ENCODE measurements at regions of chr5 and their contacts with region 1.

Region 1: GRCh38 chr5:99104538-99105132 is 175.8 kb upstream of the CHD1 start:
- DNase-seq: peak; percentile 30
- ATAC-seq: peak; percentile 59; the same call in 1 of the 2 replicates
- H3K4me3 ChIP-seq: no peak overlapping the region
- H3K27ac ChIP-seq: no peak overlapping the region
- H3K4me1 ChIP-seq: no peaks in the 10 kb centered on the region
- H3K27me3 ChIP-seq: no peaks in the 10 kb centered on the region
- CTCF ChIP-seq: peak; percentile 65
- POLR2A ChIP-seq: no peak
- RAD21 ChIP-seq: peak; percentile 60

Region 2: DNA sequence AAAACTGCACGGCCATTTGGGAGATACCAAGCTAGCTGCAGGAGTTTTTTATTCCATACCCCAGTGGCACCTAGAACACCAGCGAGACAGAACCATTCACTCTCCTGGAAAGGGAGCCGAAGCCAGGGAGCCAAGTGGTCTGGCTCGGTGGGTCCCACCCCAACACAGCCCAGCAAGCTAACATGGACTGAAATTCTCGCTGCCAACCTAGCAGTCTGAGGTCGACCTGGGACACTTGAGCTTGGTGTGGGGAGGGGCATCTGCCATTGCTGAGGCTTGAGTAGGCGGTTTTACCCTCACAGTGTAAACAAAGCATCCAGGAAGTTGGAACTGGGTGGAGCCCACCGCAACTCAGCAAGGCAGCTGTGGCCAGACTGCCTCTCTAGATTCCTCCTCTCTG is 67.0 kb before region 1 on chr5:
- CTCF ChIA-PET with region 1: no interaction called
- POLR2A ChIA-PET with region 1: interaction called, 12 read pairs
- dilution Hi-C with region 1: no loop called
- in situ Hi-C with region 1: no loop called
- intact Hi-C with region 1: no loop called
- DNase-seq: no peak
- ATAC-seq: no peak
- H3K4me3 ChIP-seq: no peak overlapping the region
- H3K27ac ChIP-seq: no peak overlapping the region
- H3K4me1 ChIP-seq: peaks cover 3% of the 10 kb centered on the region; the same call in 1 of the 2 replicates
- H3K27me3 ChIP-seq: no peaks in the 10 kb centered on the region
- CTCF ChIP-seq: no peak
- POLR2A ChIP-seq: no peak
- RAD21 ChIP-seq: no peak

Region 3: DNA sequence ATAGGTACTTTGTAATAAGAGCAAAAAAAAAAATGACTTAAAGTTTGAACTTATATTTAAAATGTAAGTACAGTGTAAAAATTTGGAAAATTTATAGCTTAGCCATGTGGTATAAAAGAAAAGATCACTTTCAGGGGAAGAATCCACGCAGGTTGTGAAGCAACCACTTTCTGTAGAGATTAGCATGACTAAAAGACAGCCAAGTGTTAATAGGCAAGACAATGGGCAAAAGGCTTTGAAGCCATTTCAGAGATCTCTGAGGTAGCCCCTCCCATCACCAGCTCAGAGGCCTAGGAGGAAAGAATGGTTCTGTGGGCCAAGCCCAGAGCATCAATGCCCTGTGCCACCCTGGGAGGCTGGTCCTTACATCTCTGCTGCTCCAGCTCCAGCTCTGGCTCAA is 170.5 kb after region 1 on chr5:
- CTCF ChIA-PET with region 1: no interaction called
- POLR2A ChIA-PET with region 1: no interaction called
- dilution Hi-C with region 1: no loop called
- in situ Hi-C with region 1: no loop called
- intact Hi-C with region 1: no loop called
- DNase-seq: no peak
- ATAC-seq: no peak
- H3K4me3 ChIP-seq: no peak overlapping the region
- H3K27ac ChIP-seq: no peak overlapping the region
- H3K4me1 ChIP-seq: no peaks in the 10 kb centered on the region
- H3K27me3 ChIP-seq: no peaks in the 10 kb centered on the region
- CTCF ChIP-seq: no peak
- POLR2A ChIP-seq: no peak
- RAD21 ChIP-seq: no peak

Region 4: DNA sequence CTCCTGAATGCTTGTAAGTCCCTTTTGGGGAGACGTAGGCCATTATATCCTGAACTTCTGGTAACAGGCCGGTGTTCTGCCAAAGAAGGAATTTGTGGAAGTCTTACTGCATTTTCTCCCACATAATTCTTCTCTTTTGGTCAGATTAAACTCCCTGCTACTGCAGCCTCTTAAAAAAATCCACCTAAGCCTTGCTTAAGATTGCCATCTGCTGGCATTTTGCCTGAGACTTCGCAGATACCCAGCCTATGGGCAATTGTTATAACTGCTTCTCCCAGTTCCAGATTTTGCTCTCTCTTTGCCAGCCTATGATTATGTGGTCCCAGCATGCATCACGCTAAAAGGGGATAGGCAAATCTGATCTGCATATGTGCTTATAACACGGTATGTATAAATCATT is 215.8 kb after region 1 on chr5:
- CTCF ChIA-PET with region 1: interaction called, 12 read pairs
- POLR2A ChIA-PET with region 1: no interaction called
- dilution Hi-C with region 1: no loop called
- in situ Hi-C with region 1: no loop called
- intact Hi-C with region 1: no loop called
- DNase-seq: no peak
- ATAC-seq: no peak
- H3K4me3 ChIP-seq: no peak overlapping the region
- H3K27ac ChIP-seq: no peak overlapping the region
- H3K4me1 ChIP-seq: no peaks in the 10 kb centered on the region
- H3K27me3 ChIP-seq: no peaks in the 10 kb centered on the region
- CTCF ChIP-seq: no peak
- POLR2A ChIP-seq: no peak
- RAD21 ChIP-seq: no peak

Measured in IMR-90 (cell line).